ENCODE measurements at regions of chr12 and their contacts with region 1.

Region 1: GRCh38 chr12:14716848-14717444 is 20.5 kb upstream of the GUCY2C start:
- DNase-seq: peak in 1 of 2 donors; percentile 77
- ATAC-seq: peak; percentile 46 to 73 (median 59)
- H3K4me3 ChIP-seq: no peak overlapping the region
- H3K4me3 Mint-ChIP-seq: no peak overlapping the region
- H3K27ac ChIP-seq: no peak overlapping the region
- H3K27ac Mint-ChIP-seq: no peak overlapping the region
- H3K4me1 ChIP-seq: no peaks in the 10 kb centered on the region
- H3K4me1 Mint-ChIP-seq: no peaks in the 10 kb centered on the region
- H3K27me3 ChIP-seq: no peaks in the 10 kb centered on the region
- H3K27me3 Mint-ChIP-seq: peaks cover 19 to 22% of the 10 kb centered on the region in 2 donors
- CTCF ChIP-seq: peak; percentile 52

Region 2: GRCh38 chr12:14629832-14630710 is 86.9 kb before region 1 on chr12:
- intact Hi-C with region 1: loop called (anchors 1 kb)
- DNase-seq: peak; percentile 28 to 82
- ATAC-seq: peak; percentile 89 to 100 (median 92)
- H3K4me3 ChIP-seq: no peak overlapping the region
- H3K4me3 Mint-ChIP-seq: no peak overlapping the region
- H3K27ac ChIP-seq: no peak overlapping the region
- H3K27ac Mint-ChIP-seq: no peak overlapping the region
- H3K4me1 ChIP-seq: no peaks in the 10 kb centered on the region
- H3K4me1 Mint-ChIP-seq: no peaks in the 10 kb centered on the region
- H3K27me3 ChIP-seq: no peaks in the 10 kb centered on the region
- H3K27me3 Mint-ChIP-seq: peaks cover 7 to 20% of the 10 kb centered on the region in 2 donors
- CTCF ChIP-seq: peak; percentile 86